Colonic mucosa (tissue), 4 donors: ENCODE measurements at regions of chr12 and their contacts with region 1.

Region 1: DNA sequence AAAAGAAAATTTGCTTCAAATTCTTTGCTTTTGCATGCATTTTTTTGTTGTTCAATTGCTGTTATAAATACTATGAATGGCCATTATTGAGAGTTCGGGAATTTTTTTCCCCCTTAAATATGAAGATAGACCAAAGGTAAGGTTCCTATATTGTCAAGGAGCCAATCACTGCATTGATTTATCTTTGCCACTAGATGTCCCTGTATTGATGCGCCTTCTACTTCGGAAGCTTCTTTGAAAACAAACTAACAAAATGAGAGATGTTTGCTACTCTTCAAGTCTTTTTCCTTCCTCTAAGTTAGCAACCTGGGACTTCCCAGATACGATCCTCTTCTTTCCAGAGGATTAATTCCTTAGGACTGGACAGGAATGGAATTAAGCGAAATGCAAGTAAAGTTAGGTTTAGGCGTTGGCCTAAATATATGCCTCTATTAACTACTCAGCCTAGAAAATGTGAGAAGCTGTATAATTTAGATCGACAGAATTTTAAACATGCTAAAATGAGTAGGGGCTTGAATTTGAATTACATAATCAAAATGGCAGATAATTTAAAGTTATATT is 318.1 kb downstream of the AEBP2 start:
- DNase-seq: no peak
- H3K4me3 ChIP-seq: no peak overlapping the region
- H3K27ac ChIP-seq: no peak overlapping the region
- H3K4me1 ChIP-seq: no peaks in the 10 kb centered on the region
- H3K27me3 ChIP-seq: no peaks in the 10 kb centered on the region
- CTCF ChIP-seq: peak; percentile 63

Region 2: DNA sequence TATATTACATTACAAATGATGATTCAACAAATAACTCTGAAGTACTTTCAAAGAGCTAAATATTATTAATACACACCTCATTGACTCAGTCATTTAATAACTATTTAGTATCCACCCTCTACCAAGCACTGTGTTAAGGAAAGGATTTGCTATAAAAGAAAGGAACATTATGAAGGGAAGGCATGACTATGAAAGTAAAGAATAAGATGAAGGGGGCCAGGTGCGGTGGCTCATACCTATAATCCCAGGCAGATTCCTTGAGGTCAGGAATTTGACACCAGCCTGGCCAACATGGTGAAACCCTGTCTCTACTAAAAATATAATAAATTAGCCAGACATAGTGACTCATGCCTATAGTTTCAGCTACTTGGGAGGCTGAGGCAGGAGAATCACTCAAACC is 1127.5 kb before region 1 on chr12:
- intact Hi-C with region 1: no loop called
- DNase-seq: no peak
- H3K4me3 ChIP-seq: no peak overlapping the region
- H3K27ac ChIP-seq: no peak overlapping the region
- H3K4me1 ChIP-seq: no peaks in the 10 kb centered on the region
- H3K27me3 ChIP-seq: no peaks in the 10 kb centered on the region
- CTCF ChIP-seq: no peak

Region 3: GRCh38 chr12:19712041-19712440 is 45.4 kb before region 1 on chr12:
- intact Hi-C with region 1: no loop called
- DNase-seq: no peak
- H3K4me3 ChIP-seq: no peak overlapping the region
- H3K27ac ChIP-seq: no peak overlapping the region
- H3K4me1 ChIP-seq: no peaks in the 10 kb centered on the region
- H3K27me3 ChIP-seq: no peaks in the 10 kb centered on the region
- CTCF ChIP-seq: no peak

Region 4: GRCh38 chr12:19893514-19893913 is 136.1 kb after region 1 on chr12:
- intact Hi-C with region 1: loop called (anchors 10 kb)
- DNase-seq: no peak
- H3K4me3 ChIP-seq: no peak overlapping the region
- H3K27ac ChIP-seq: no peak overlapping the region
- H3K4me1 ChIP-seq: no peaks in the 10 kb centered on the region
- H3K27me3 ChIP-seq: no peaks in the 10 kb centered on the region
- CTCF ChIP-seq: no peak

Region 5: DNA sequence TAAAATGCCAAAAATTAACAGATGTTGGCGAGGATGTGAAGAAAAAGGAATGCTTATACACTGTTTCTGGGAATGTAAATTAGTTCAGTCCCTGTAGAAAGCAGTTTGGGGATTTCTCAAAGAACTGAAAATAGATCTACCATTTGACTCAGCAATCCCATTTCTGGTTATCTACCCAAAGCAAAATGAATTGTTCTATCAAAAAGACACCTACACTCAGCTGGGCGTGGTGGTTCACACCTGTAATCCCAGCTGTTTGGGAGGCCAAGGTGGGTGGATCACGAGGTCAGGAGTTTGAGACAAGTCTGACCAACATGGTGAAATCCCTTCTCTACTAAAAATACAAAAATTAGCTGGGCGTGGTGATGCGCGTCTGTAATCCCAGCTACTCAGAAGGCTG is 331.7 kb after region 1 on chr12:
- intact Hi-C with region 1: no loop called
- DNase-seq: no peak
- H3K4me3 ChIP-seq: no peak overlapping the region
- H3K27ac ChIP-seq: no peak overlapping the region
- H3K4me1 ChIP-seq: no peaks in the 10 kb centered on the region
- H3K27me3 ChIP-seq: no peaks in the 10 kb centered on the region
- CTCF ChIP-seq: no peak

Region 6: GRCh38 chr12:20264608-20265114 is 507.3 kb after region 1 on chr12:
- intact Hi-C with region 1: no loop called
- DNase-seq: no peak
- H3K4me3 ChIP-seq: no peak overlapping the region
- H3K27ac ChIP-seq: no peak overlapping the region
- H3K4me1 ChIP-seq: no peaks in the 10 kb centered on the region
- H3K27me3 ChIP-seq: no peaks in the 10 kb centered on the region
- CTCF ChIP-seq: no peak